ENCODE measurements at regions of chr2 and their contacts with region 1.

Region 1: DNA sequence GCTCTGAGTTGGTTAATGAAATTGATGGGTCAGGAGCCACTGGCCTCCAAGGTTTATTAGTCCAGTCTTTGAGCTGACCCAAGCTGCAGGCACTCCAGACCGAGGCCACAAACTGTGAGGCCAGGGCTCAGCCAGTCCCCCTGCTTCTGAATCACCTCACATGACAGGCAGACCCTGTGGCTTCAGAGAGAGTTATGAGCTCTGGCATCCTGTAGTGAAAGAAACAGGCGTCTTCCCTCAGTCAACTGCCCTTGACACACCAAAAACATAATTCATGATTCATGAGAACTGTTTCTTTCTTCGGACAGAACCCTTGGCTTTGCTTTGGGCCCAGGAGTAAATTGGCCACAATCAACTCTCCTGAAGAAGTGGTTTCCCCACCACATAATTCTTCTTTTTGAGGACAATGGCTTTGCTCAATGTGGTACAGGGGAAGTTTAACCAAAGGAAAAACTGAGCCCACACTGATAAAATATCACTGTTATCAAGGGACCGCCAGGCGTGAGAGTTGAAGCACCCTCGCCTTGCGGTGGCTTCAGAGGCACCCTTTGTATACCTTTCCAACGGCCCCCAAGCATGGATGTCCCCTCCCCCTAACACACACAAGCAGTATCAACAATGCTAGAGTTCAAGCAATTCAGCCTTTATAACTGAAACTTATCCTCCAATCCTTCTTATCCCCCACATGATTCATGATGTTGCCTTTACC is 226.9 kb downstream of the CYRIA start:
- DNase-seq: peak; percentile 95 to 99 (median 98)
- H3K4me3 ChIP-seq: peak overlapping the region in 3 of 7 experiments; percentile 3 to 46 (median 6)
- H3K27ac ChIP-seq: peak overlapping the region; percentile 88 to 92
- H3K4me1 ChIP-seq: peaks cover 33 to 89% (median 86%) of the 10 kb centered on the region in 4 experiments
- H3K27me3 ChIP-seq: no peaks in the 10 kb centered on the region

Region 2: GRCh38 chr2:16400127-16400623 is 38.6 kb before region 1 on chr2:
- CTCF ChIA-PET with region 1: interaction called, 5 read pairs
- POLR2A ChIA-PET with region 1: interaction called, 17 read pairs
- DNase-seq: peak; percentile 85 to 97 (median 96)
- H3K4me3 ChIP-seq: no peak overlapping the region
- H3K27ac ChIP-seq: no peak overlapping the region
- H3K4me1 ChIP-seq: peaks cover 3 to 26% (median 14%) of the 10 kb centered on the region in 4 experiments
- H3K27me3 ChIP-seq: no peaks in the 10 kb centered on the region

Region 3: DNA sequence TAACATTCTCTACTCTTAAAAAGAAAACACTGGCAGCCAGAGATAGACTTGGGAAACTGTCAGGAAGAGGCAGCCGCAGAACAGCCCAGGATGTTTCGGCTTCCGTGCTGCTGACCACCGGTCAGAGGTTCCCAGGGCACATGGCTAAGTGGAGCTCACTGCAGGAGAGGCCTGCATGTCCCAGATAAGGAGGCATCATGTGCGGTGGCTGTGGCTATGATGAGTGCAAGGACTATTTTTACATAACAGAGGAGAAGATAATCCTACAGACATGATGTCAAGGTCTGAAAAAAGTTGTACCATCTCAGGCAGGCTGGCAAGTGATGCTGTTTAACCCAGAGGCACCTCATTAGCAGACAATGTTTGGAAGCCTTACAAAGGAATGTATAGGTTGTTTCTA is 25.5 kb before region 1 on chr2:
- CTCF ChIA-PET with region 1: interaction called, 30 read pairs
- POLR2A ChIA-PET with region 1: interaction called, 34 read pairs
- DNase-seq: peak; percentile 88 to 97 (median 94)
- H3K4me3 ChIP-seq: peak overlapping the region in 1 of 7 experiments; percentile 24
- H3K27ac ChIP-seq: peak overlapping the region; percentile 51 to 83
- H3K4me1 ChIP-seq: peaks cover 19 to 31% (median 20%) of the 10 kb centered on the region in 4 experiments
- H3K27me3 ChIP-seq: no peaks in the 10 kb centered on the region

Region 4: DNA sequence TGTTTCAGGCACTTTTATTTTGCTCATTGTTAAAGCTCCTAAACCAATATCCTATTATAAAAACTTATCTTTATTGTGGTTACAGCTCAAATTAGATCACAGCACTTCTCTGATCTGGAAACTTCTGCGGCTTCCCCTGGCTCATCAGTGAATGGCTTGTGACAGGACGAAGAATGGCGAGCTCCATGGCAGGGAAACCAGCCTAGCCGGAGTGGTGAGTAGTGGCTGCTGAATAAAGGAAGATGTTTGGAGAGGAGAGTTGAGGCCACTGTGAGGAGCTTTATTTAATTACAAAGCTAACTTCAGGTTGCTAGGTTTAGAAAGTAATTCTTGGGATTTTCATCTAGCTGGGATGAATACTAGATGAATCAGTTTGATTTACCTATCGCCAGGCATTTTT is 13.3 kb after region 1 on chr2:
- CTCF ChIA-PET with region 1: interaction called, 14 read pairs
- POLR2A ChIA-PET with region 1: no interaction called
- DNase-seq: no peak
- H3K4me3 ChIP-seq: peak overlapping the region in 1 of 7 experiments; percentile 4
- H3K27ac ChIP-seq: no peak overlapping the region
- H3K4me1 ChIP-seq: peaks cover 0 to 4% (median under 1%) of the 10 kb centered on the region in 4 experiments
- H3K27me3 ChIP-seq: no peaks in the 10 kb centered on the region

Region 5: DNA sequence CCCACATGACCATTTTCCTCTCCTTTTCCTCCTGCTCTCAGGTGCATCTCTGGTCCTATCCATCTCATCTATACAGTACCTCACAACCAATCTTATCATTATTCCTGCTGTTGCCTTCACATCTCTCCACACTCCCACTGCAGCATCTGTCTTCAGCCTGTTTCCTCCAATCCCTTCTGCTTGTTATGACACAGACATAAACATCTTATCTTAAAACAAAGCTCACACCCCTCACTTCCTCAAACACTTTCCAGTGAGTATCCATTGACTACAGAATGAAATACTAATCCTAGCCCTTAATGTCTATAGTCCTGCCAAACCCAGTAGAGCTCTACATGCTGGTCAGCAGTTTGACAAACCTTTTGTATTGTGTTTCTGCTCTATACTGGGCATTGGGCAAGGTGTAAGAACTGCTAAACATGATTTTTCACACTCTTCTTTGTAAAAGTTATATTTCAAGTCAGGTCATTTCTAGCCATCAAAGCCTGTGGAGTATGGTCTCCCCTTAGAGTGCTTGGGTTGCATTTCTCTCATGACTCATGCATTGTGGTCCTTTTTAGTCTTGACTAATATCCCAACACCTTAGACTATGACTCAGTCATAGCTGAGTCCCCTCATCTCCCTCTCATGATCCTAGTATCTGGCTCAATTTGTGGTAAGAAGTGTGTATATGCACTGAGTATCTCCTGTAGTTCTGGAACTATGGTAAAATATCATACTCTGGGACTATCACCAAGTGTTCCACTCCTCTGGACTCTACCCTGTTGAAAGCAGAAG is 39.9 kb after region 1 on chr2:
- CTCF ChIA-PET with region 1: interaction called, 49 read pairs
- POLR2A ChIA-PET with region 1: interaction called, 51 read pairs
- DNase-seq: peak; percentile 68 to 93 (median 89)
- H3K4me3 ChIP-seq: peak overlapping the region in 6 of 7 experiments; percentile 20 to 76 (median 62)
- H3K27ac ChIP-seq: peak overlapping the region; percentile 77 to 84
- H3K4me1 ChIP-seq: peaks cover 45 to 92% (median 78%) of the 10 kb centered on the region in 4 experiments
- H3K27me3 ChIP-seq: no peaks in the 10 kb centered on the region

Region 6: GRCh38 chr2:16487686-16488085 is 48.9 kb after region 1 on chr2:
- CTCF ChIA-PET with region 1: interaction called, 49 read pairs
- POLR2A ChIA-PET with region 1: interaction called, 39 read pairs
- DNase-seq: peak; percentile 81 to 87 (median 85)
- H3K4me3 ChIP-seq: no peak overlapping the region
- H3K27ac ChIP-seq: peak overlapping the region in 1 of 2 experiments; percentile 17
- H3K4me1 ChIP-seq: peaks cover 17 to 59% (median 44%) of the 10 kb centered on the region in 4 experiments
- H3K27me3 ChIP-seq: no peaks in the 10 kb centered on the region

Measured in common myeloid progenitor, CD34-positive (primary cell).